ENCODE measurements at regions of chr10 and their contacts with region 1.

Region 1: GRCh38 chr10:117005027-117005526 is at the start of gene SHTN1:
- H3K4me3 Mint-ChIP-seq: peak within 1 kb of the TSS; percentile 88
- H3K27ac Mint-ChIP-seq: peak within 1 kb of the TSS; percentile 94
- H3K4me1 Mint-ChIP-seq: peaks cover 42% of the 10 kb centered on the region
- H3K27me3 Mint-ChIP-seq: peaks cover 3% of the 10 kb centered on the region

Region 2: DNA sequence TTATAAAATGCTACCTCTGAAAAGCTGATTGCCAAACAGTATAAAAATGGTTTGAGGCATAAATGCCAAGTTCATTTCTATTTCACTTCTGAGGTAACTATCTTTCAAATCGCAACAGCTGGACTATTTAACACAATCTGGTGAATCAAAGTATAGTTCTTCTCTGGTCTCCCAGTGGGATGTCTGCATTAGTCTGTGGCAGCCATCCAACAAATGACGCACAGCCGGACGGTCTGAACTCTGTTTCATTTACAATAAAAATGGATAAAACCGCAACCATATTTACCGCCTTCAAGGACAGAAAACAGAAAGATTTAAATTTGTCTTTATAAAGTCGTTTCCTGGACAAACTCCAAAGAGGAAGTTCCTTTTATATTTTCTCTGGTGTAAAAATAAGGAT is 113.9 kb before region 1 on chr10:
- intact Hi-C with region 1: loop called (anchors 5 kb)
- H3K4me3 Mint-ChIP-seq: no peak overlapping the region
- H3K27ac Mint-ChIP-seq: no peak overlapping the region
- H3K4me1 Mint-ChIP-seq: peaks cover 19% of the 10 kb centered on the region
- H3K27me3 Mint-ChIP-seq: no peaks in the 10 kb centered on the region

Region 3: DNA sequence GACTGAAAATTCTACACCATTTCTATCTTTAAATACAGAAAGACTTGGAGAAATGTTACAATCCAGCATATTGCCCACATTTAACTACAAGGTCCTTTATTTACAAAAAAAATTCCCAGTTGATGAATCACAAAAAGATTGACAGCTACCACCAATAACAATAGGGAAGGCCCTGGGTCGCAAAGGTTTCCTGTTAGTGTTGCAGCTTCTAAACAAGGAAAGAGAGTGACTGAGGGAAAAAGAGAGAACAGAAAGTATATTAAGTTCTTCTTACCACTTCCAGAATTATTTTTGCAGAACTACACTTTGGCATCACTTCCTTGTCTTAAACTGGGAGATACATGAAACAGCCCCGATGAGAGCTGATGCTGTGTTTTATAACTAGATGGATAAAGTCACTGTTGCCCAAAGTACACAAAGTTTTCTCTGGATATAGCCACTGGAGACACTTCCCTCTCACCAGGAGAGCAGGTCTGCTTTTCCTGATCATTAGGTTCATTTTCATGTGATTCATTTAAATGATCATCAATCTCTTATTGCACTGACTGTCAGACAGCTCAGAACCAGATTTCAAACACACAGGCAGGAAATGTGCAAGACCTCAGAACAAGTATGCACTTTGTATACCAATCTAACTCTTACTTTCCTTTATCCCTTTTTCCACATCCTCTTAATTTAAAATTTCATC is 57.1 kb before region 1 on chr10:
- intact Hi-C with region 1: loop called (anchors 1 kb)
- H3K4me3 Mint-ChIP-seq: peak overlapping the region; percentile 42
- H3K27ac Mint-ChIP-seq: peak overlapping the region; percentile 85
- H3K4me1 Mint-ChIP-seq: peaks cover 30% of the 10 kb centered on the region
- H3K27me3 Mint-ChIP-seq: no peaks in the 10 kb centered on the region

Region 4: GRCh38 chr10:117167789-117168674 is 163.0 kb after region 1 on chr10:
- intact Hi-C with region 1: loop called (anchors 5 kb)
- H3K4me3 Mint-ChIP-seq: peak overlapping the region; percentile 67
- H3K27ac Mint-ChIP-seq: no peak overlapping the region
- H3K4me1 Mint-ChIP-seq: peaks cover 51% of the 10 kb centered on the region
- H3K27me3 Mint-ChIP-seq: peaks cover 99% of the 10 kb centered on the region

Region 5: DNA sequence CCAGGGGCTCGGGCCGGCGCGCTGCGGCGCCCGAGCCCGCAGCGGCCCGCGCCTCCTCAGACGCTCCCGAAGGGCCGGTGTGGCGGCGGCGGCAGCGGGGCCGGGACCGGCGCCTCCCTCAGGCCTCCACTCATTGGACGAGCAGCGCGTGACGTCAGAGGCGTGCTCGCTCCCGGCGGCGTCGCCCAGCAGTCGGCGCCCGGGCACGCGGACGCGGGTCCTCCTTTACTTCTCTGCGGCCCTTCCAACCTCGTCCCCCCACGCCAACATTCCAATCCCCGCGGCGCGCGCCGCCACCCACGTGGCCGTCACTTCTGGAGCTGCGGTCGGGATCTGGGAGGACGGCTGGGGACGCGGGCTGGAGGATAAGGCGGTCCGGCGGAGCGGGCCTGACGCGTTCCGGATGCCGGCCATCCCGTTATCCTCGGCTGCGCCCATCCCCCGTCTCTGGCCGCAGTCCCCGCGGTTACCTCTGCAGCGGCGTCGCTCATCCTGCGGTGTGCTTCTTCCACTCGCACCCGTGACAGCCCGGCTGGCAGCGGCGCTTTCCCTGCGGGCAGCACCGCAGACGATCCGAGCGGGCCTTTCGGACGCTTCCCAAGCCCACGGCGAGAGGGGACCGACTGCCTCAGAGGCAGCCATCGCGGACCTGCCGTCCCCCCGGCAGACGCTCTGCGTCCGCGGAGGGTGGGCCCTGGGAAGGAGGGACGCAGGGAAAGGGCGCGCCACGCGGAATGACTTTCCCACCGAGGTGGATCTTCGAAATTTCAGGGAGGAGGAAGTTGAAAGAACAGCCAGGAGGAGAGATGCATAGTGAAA is 370.5 kb after region 1 on chr10 and contains the start of gene PDZD8:
- intact Hi-C with region 1: loop called (anchors 10 kb)
- H3K4me3 Mint-ChIP-seq: peak within 1 kb of the TSS; percentile 95
- H3K27ac Mint-ChIP-seq: peak within 1 kb of the TSS; percentile 92
- H3K4me1 Mint-ChIP-seq: peaks cover 40% of the 10 kb centered on the region
- H3K27me3 Mint-ChIP-seq: peaks cover 9% of the 10 kb centered on the region

Region 6: DNA sequence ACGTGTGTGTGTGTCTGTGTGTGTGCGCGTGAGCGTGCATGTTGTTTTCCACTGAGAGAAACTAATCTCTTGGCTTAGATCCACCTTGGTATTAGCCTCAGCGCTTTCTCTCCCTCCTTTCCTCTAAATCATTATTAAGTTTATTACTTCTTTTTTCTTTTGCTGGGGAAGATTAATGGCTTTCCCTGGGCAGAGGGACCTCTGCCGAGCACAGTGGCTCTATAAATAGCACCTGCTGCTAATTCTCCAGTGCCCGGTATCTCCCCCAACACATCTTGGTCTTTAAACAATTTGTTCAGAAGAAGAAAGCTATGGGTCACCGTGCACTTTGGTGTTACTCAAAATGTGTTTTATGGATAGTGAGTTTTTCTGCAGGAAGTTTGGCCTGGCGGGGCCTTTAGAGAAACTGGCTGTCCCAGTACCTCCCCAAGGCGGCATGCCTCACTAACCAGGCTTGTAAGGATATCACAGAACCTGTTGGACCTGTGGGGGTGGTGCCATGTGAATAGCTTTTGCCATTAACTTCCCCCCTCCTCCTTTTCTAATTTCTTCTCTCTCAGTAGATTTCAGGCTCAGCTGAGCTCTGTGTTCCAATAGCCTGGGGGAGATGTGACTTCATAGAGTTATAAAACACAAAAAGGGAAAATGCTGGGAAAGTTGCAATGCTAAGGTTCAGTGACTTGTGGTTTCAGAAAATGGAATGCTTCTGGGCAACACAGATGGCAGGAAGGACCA is 1111.8 kb after region 1 on chr10:
- intact Hi-C with region 1: no loop called
- H3K4me3 Mint-ChIP-seq: no peak overlapping the region
- H3K27ac Mint-ChIP-seq: no peak overlapping the region
- H3K4me1 Mint-ChIP-seq: no peaks in the 10 kb centered on the region
- H3K27me3 Mint-ChIP-seq: no peaks in the 10 kb centered on the region

Measured in dendritic cell treated with granulocyte-macrophage colony-stimulating factor and Interleukin-4, amounts not matched to agents 40 ng/mL and 50 ng/mL, for 4 days (primary cell).